ENCODE measurements at regions of chr5 and their contacts with region 1.

Region 1: DNA sequence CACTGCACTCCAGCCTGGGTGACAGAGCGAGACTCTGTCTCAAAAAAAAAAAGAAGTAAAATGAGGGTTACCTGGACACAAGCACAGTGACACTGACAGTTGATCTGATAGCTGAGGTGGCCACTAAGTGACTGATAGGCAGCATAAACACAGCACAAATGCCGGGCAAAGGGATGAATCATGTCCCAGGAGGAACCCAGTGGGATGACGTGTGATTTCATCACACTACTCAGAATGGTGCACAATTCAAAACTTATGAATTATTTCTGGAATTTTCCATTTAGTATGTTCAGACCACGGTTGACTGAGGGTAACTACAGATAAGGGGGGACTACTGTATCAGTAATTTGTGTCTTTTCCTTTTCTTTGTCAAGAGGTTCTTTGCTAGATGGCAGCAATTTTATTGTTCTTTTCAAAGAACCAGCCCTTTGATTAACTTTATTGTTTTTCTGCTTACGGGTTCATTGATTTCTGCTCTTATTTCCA is 34.3 kb upstream of the RNF130 start:
- DNase-seq: no peak
- ATAC-seq: no peak
- H3K4me3 Mint-ChIP-seq: no peak overlapping the region
- H3K27ac Mint-ChIP-seq: no peak overlapping the region
- H3K4me1 Mint-ChIP-seq: no peaks in the 10 kb centered on the region
- H3K27me3 Mint-ChIP-seq: peaks cover 5% of the 10 kb centered on the region

Region 2: DNA sequence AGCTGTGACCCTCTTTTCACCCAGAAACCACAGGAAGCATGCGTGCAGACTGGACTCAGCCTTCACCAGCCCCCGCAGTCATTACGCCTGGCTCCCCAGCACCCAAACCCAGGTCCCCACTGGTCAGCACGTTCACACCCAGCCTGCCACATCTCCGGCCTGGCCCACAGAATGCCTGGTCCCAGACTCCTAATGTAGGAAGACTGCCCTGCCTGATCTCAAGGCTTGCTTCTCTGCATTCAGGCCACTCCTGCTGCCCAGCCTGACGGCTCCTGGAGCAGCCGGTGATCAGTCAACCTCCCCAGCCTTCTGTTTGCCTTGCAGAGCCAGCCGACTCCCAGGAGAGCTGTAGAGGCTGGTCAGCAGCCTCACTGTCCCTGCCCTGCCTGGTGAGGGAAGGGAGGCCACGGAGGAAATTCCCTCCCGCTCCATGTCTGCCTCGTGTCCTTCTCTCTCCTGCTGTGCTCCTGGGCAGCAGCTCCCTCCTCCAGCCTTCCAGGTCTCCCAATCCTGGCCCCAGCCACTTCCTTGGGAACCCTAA is 786.1 kb before region 1 on chr5:
- CTCF ChIA-PET with region 1: no interaction called
- POLR2A ChIA-PET with region 1: no interaction called
- intact Hi-C with region 1: loop called in 1 of 2 experiments (anchors 5 kb)
- DNase-seq: no peak
- ATAC-seq: no peak
- H3K4me3 Mint-ChIP-seq: no peak overlapping the region
- H3K27ac Mint-ChIP-seq: no peak overlapping the region
- H3K4me1 Mint-ChIP-seq: no peaks in the 10 kb centered on the region
- H3K27me3 Mint-ChIP-seq: no peaks in the 10 kb centered on the region

Region 3: DNA sequence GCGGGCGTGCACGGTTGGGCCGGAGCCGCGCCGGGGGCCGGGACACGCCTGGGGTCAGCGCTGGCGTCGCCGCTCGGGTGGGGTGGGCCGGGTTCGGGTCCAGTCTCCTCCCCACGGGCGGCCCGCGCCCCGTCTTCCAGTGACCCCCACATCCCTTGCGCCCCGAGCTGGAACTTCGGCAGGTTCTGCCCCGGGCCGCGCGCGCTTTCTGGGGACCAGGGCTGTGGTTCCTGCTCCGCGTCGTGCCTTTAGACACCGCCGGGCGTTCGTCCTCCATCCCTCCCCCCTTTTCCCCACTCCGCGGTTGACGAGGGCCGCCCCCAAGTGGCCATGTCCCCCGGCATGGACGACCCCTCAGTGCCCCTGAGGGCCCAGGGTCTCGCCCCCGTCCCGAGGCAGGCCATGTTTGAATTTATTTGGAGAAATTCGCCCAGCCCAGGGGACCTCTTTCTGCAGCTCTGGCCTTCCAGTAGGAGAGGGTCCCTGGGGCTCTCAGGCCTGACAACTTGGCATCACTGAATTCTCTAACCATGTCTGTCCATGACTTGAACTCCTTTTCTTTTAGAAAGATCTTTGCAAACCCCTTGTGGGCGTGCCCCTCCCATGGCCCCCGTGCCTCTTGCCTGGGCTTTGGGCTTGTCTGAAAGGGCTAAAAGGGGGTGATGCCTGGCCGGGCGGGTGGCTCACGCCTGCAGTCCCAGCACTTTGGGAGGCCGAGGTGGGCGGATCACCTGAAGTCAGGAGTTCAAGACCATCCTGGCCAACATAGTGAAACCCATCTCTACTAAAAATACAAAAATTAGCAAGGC is 288.6 kb before region 1 on chr5:
- CTCF ChIA-PET with region 1: no interaction called
- POLR2A ChIA-PET with region 1: no interaction called
- intact Hi-C with region 1: no loop called
- DNase-seq: no peak
- ATAC-seq: no peak
- H3K4me3 Mint-ChIP-seq: no peak overlapping the region
- H3K27ac Mint-ChIP-seq: no peak overlapping the region
- H3K4me1 Mint-ChIP-seq: peaks cover 26% of the 10 kb centered on the region
- H3K27me3 Mint-ChIP-seq: peaks cover 2% of the 10 kb centered on the region

Region 4: GRCh38 chr5:181121659-181122561 is 1016.0 kb after region 1 on chr5:
- CTCF ChIA-PET with region 1: no interaction called
- POLR2A ChIA-PET with region 1: no interaction called
- intact Hi-C with region 1: no loop called
- DNase-seq: no peak
- ATAC-seq: no peak
- H3K4me3 Mint-ChIP-seq: no peak overlapping the region
- H3K27ac Mint-ChIP-seq: no peak overlapping the region
- H3K4me1 Mint-ChIP-seq: no peaks in the 10 kb centered on the region
- H3K27me3 Mint-ChIP-seq: peaks cover 58% of the 10 kb centered on the region

Measured in activated CD4-positive, alpha-beta T cell treated with anti-CD3 and anti-CD28 coated beads for 36 hours (primary cell).